Caco-2 (cell line): ENCODE measurements at regions of chrX and their contacts with region 1.

Region 1: GRCh38 chrX:6371353-6371752 is 142.7 kb upstream of the NLGN4X start:
- DNase-seq: no peak
- H3K4me3 ChIP-seq: no peak overlapping the region
- H3K4me3 Mint-ChIP-seq: no peak overlapping the region
- H3K27ac Mint-ChIP-seq: no peak overlapping the region
- H3K4me1 ChIP-seq: peaks cover 35% of the 10 kb centered on the region
- H3K4me1 Mint-ChIP-seq: peaks cover 13% of the 10 kb centered on the region
- H3K27me3 ChIP-seq: no peaks in the 10 kb centered on the region
- H3K27me3 Mint-ChIP-seq: no peaks in the 10 kb centered on the region
- CTCF ChIP-seq: no peak

Region 2: GRCh38 chrX:6302566-6302965 is 68.8 kb before region 1 on chrX:
- CTCF ChIA-PET with region 1: no interaction called
- POLR2A ChIA-PET with region 1: interaction called, 3 read pairs
- intact Hi-C with region 1: loop called (anchors 1 kb)
- DNase-seq: peak in 1 of 2 experiments; percentile 1
- H3K4me3 ChIP-seq: no peak overlapping the region
- H3K4me3 Mint-ChIP-seq: no peak overlapping the region
- H3K27ac Mint-ChIP-seq: no peak overlapping the region
- H3K4me1 ChIP-seq: no peaks in the 10 kb centered on the region
- H3K4me1 Mint-ChIP-seq: peaks cover 4% of the 10 kb centered on the region
- H3K27me3 ChIP-seq: no peaks in the 10 kb centered on the region
- H3K27me3 Mint-ChIP-seq: no peaks in the 10 kb centered on the region
- CTCF ChIP-seq: no peak

Region 3: DNA sequence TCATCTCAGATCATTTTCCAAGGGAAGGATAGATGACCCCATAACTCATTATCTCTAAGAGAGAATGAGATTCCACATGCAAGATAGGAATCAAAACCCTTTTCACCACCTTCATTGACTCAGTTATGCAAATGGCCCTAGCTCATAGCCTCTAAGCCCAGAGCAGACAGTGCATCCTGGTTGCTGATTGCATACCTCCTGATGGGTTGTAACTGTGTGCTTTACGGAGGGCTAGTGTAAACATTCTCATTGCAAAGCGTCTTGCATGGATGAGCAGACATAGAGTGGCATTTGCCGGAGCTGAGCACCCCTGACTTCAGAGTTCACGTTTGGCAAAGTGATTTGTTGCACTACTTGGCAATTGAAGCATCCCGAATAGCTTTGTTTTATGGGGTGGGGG is 12.6 kb after region 1 on chrX:
- CTCF ChIA-PET with region 1: no interaction called
- POLR2A ChIA-PET with region 1: no interaction called
- intact Hi-C with region 1: loop called (anchors 1 kb)
- DNase-seq: no peak
- H3K4me3 ChIP-seq: no peak overlapping the region
- H3K4me3 Mint-ChIP-seq: no peak overlapping the region
- H3K27ac Mint-ChIP-seq: no peak overlapping the region
- H3K4me1 ChIP-seq: peaks cover 21% of the 10 kb centered on the region; the same call in 1 of the 2 replicates
- H3K4me1 Mint-ChIP-seq: peaks cover 17% of the 10 kb centered on the region
- H3K27me3 ChIP-seq: no peaks in the 10 kb centered on the region
- H3K27me3 Mint-ChIP-seq: no peaks in the 10 kb centered on the region
- CTCF ChIP-seq: no peak

Region 4: DNA sequence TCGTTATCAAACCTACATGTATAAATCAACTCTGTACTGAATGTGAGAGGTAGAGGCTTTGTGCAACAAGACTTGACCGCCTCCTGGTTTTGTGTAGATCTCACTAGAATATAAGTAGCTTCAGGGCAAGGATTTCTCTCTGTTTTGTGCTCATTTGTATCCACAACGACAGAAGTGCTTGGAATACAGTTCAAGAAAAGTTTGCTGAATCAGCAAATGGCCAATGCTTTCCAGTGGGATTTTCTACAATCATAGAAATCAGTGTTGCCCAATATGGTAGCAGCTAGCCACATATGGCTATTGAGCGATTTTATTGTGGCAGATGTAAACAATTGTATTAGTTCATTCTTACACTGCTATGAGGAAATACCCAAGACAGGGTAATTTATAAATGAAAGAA is 36.2 kb after region 1 on chrX:
- CTCF ChIA-PET with region 1: no interaction called
- POLR2A ChIA-PET with region 1: no interaction called
- intact Hi-C with region 1: no loop called
- DNase-seq: no peak
- H3K4me3 ChIP-seq: no peak overlapping the region
- H3K4me3 Mint-ChIP-seq: no peak overlapping the region
- H3K27ac Mint-ChIP-seq: no peak overlapping the region
- H3K4me1 ChIP-seq: no peaks in the 10 kb centered on the region
- H3K4me1 Mint-ChIP-seq: no peaks in the 10 kb centered on the region
- H3K27me3 ChIP-seq: no peaks in the 10 kb centered on the region
- H3K27me3 Mint-ChIP-seq: no peaks in the 10 kb centered on the region
- CTCF ChIP-seq: no peak

Region 5: GRCh38 chrX:6990552-6991193 is 619.3 kb after region 1 on chrX:
- CTCF ChIA-PET with region 1: no interaction called
- POLR2A ChIA-PET with region 1: no interaction called
- intact Hi-C with region 1: loop called (anchors 5 kb)
- DNase-seq: no peak
- H3K4me3 ChIP-seq: no peak overlapping the region
- H3K4me3 Mint-ChIP-seq: no peak overlapping the region
- H3K27ac Mint-ChIP-seq: peak overlapping the region; percentile 76
- H3K4me1 ChIP-seq: peaks cover 40% of the 10 kb centered on the region
- H3K4me1 Mint-ChIP-seq: peaks cover 7% of the 10 kb centered on the region
- H3K27me3 ChIP-seq: no peaks in the 10 kb centered on the region
- H3K27me3 Mint-ChIP-seq: no peaks in the 10 kb centered on the region
- CTCF ChIP-seq: no peak